Left colon (tissue), 2 donors: ENCODE measurements at regions of chr10 and their contacts with region 1.

Region 1: GRCh38 chr10:80158598-80159127 is 26.1 kb downstream of the PLAC9 start:
- DNase-seq: peak; percentile 61 to 78
- ATAC-seq: peak; percentile 35

Region 2: DNA sequence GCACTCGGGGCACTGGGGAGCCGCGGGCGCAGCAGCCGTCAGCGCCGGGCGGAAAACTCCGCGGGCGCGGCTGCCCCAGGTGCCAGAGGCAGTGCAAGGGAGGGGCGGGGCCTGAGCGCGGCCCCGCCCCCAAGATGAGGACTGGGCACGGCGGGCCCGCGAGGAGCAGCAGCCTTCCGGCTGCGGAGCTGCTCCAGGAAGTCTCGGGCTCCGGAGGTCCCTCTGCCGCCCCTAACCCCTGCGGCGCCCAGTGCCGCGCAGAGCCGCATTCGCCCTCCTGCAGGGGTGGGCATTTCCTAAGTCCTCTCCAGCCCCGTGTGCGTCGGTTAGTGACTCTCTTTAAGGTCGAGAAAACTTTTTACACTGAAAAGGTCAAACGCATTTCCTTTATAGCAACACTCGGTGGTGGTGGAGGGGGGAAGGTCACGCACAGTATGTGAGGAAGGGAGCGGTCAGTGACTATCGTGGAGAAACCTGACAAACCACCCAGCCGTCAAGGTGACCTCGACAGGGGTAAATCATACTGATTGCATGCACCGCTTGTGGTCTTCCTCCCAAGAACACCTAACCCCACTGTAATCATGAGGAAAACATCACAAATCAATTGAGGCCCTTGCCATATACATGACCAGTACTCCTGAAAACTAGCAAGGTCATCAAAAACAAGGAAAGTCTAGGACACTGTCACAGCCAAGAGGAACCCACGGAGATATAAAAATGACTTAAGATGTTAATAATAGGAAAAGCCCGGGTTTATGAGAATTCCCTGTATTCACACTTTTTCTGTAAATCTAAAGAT is 47.0 kb after region 1 on chr10 and contains the start of gene ANXA11:
- intact Hi-C with region 1: loop called in 1 of 2 experiments (anchors 10 kb)
- DNase-seq: peak; percentile 83 to 92
- ATAC-seq: peak; percentile 65
- total RNA-seq, gene ANXA11: 384 to 427 TPM